ENCODE measurements at regions of chr7 and their contacts with region 1.

Region 1: DNA sequence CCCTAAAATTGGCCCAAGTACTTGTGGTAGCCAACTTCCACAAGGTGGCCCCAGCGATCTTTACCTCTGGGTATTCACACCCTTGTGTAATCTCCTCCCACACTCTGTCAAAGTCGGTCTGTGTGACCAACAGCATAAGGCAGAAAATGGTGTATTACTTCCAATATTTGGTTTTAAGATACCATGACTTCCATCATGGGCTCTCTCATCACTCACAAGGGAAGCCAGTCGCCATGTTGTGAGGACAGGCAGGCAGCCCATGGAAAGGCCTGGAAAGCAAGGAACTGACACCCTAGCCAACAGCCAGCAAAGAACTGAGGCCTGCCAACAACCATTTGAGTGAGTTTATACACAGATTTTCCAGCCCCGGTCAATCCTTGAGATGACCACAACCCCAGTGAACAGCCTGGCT is 91.0 kb upstream of the KMT2E start:
- DNase-seq: peak; percentile 54 to 88 (median 72)
- ATAC-seq: peak; percentile 96
- H3K4me3 ChIP-seq: no peak overlapping the region
- H3K4me3 Mint-ChIP-seq: no peak overlapping the region
- H3K27ac ChIP-seq: no peak overlapping the region
- H3K27ac Mint-ChIP-seq: peak overlapping the region; percentile 55
- H3K4me1 ChIP-seq: no peaks in the 10 kb centered on the region
- H3K4me1 Mint-ChIP-seq: peaks cover 5% of the 10 kb centered on the region
- H3K27me3 ChIP-seq: no peaks in the 10 kb centered on the region
- H3K27me3 Mint-ChIP-seq: no peaks in the 10 kb centered on the region
- CTCF ChIP-seq: peak; percentile 66

Region 2: GRCh38 chr7:103447073-103447951 is 1475.7 kb before region 1 on chr7:
- CTCF ChIA-PET with region 1: no interaction called
- POLR2A ChIA-PET with region 1: no interaction called
- intact Hi-C with region 1: loop called in 1 of 2 experiments (anchors 5 kb)
- DNase-seq: peak in 3 of 9 experiments; percentile 21 to 45 (median 40)
- ATAC-seq: peak; percentile 23
- H3K4me3 ChIP-seq: no peak overlapping the region
- H3K4me3 Mint-ChIP-seq: no peak overlapping the region
- H3K27ac ChIP-seq: no peak overlapping the region
- H3K27ac Mint-ChIP-seq: no peak overlapping the region
- H3K4me1 ChIP-seq: peaks cover 17% of the 10 kb centered on the region
- H3K4me1 Mint-ChIP-seq: peaks cover 19% of the 10 kb centered on the region
- H3K27me3 ChIP-seq: peaks cover 7 to 14% of the 10 kb centered on the region in 2 experiments
- H3K27me3 Mint-ChIP-seq: peaks cover 59% of the 10 kb centered on the region
- CTCF ChIP-seq: peak; percentile 32

Region 3: DNA sequence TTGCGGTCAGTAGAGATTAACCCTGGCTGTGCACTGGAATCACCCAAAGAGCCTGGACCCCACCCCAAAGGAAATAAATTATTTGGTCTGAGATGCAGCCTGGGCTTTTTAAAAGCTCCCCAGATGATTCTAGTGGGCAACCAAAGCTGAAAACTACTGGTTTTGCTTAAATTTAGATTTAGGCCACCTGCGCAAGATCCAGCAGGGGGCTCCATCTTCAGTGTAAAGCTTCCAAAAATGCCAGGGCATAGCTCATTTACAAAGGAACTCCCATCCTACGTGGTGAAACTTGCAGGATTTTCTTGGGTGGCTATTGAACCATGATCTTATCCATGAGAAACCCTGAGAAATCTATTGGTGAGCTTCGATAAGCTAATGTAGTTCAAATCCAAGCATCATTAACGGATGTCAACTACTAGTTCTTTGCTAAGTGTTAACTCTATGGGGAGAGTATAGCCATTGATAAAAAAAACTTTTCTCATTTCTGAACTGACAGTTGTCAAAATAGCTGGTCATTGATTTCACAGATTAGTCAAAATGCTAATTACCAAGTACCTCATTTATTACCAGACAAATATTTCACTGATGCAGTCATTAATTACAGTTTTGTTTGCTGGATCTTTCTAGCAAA is 279.3 kb before region 1 on chr7:
- CTCF ChIA-PET with region 1: no interaction called
- POLR2A ChIA-PET with region 1: no interaction called
- intact Hi-C with region 1: loop called (anchors 2 to 5 kb)
- DNase-seq: no peak
- ATAC-seq: no peak
- H3K4me3 ChIP-seq: no peak overlapping the region
- H3K4me3 Mint-ChIP-seq: no peak overlapping the region
- H3K27ac ChIP-seq: no peak overlapping the region
- H3K27ac Mint-ChIP-seq: no peak overlapping the region
- H3K4me1 ChIP-seq: no peaks in the 10 kb centered on the region
- H3K4me1 Mint-ChIP-seq: no peaks in the 10 kb centered on the region
- H3K27me3 ChIP-seq: no peaks in the 10 kb centered on the region
- H3K27me3 Mint-ChIP-seq: peaks cover 20% of the 10 kb centered on the region
- CTCF ChIP-seq: no peak

Region 4: GRCh38 chr7:104908636-104909035 is 14.4 kb before region 1 on chr7:
- CTCF ChIA-PET with region 1: interaction called, 18 read pairs
- POLR2A ChIA-PET with region 1: no interaction called
- intact Hi-C with region 1: no loop called
- DNase-seq: no peak
- ATAC-seq: no peak
- H3K4me3 ChIP-seq: no peak overlapping the region
- H3K4me3 Mint-ChIP-seq: no peak overlapping the region
- H3K27ac ChIP-seq: no peak overlapping the region
- H3K27ac Mint-ChIP-seq: no peak overlapping the region
- H3K4me1 ChIP-seq: no peaks in the 10 kb centered on the region
- H3K4me1 Mint-ChIP-seq: no peaks in the 10 kb centered on the region
- H3K27me3 ChIP-seq: no peaks in the 10 kb centered on the region
- H3K27me3 Mint-ChIP-seq: peaks cover 10% of the 10 kb centered on the region
- CTCF ChIP-seq: no peak

Region 5: GRCh38 chr7:105003275-105003674 is 80.3 kb after region 1 on chr7:
- CTCF ChIA-PET with region 1: no interaction called
- POLR2A ChIA-PET with region 1: no interaction called
- intact Hi-C with region 1: no loop called
- DNase-seq: peak in 4 of 9 experiments; percentile 49 to 63 (median 54)
- ATAC-seq: peak; percentile 84
- H3K4me3 ChIP-seq: no peak overlapping the region
- H3K4me3 Mint-ChIP-seq: peak overlapping the region; percentile 71
- H3K27ac ChIP-seq: peak overlapping the region in 1 of 2 experiments; percentile 65
- H3K27ac Mint-ChIP-seq: peak overlapping the region; percentile 91
- H3K4me1 ChIP-seq: peaks cover 79% of the 10 kb centered on the region
- H3K4me1 Mint-ChIP-seq: peaks cover 85% of the 10 kb centered on the region
- H3K27me3 ChIP-seq: no peaks in the 10 kb centered on the region
- H3K27me3 Mint-ChIP-seq: no peaks in the 10 kb centered on the region
- CTCF ChIP-seq: no peak

Region 6: DNA sequence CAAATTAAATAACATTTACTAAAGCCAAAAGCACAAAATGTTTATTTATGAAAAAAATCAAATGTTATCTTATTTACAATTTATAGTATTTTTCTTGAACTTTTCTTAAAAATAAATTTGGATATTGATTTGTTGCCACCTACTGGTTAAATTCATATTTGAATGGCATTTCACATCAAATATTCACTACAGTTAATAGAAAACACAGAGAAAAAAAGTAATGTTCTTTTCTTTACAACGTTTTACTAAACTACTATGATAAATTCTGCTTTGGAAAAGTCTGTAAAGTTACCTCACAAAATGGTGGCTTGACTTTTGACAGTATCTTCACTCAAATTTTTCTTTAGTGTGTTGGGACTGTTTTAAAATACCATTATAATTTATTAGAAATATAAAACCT is 413.0 kb after region 1 on chr7:
- CTCF ChIA-PET with region 1: no interaction called
- POLR2A ChIA-PET with region 1: no interaction called
- intact Hi-C with region 1: loop called in 1 of 2 experiments (anchors 5 kb)
- DNase-seq: peak in 1 of 9 experiments; percentile 34
- ATAC-seq: no peak
- H3K4me3 ChIP-seq: no peak overlapping the region
- H3K4me3 Mint-ChIP-seq: no peak overlapping the region
- H3K27ac ChIP-seq: no peak overlapping the region
- H3K27ac Mint-ChIP-seq: no peak overlapping the region
- H3K4me1 ChIP-seq: no peaks in the 10 kb centered on the region
- H3K4me1 Mint-ChIP-seq: peaks cover 26% of the 10 kb centered on the region
- H3K27me3 ChIP-seq: no peaks in the 10 kb centered on the region
- H3K27me3 Mint-ChIP-seq: no peaks in the 10 kb centered on the region
- CTCF ChIP-seq: peak; percentile 84

Region 7: DNA sequence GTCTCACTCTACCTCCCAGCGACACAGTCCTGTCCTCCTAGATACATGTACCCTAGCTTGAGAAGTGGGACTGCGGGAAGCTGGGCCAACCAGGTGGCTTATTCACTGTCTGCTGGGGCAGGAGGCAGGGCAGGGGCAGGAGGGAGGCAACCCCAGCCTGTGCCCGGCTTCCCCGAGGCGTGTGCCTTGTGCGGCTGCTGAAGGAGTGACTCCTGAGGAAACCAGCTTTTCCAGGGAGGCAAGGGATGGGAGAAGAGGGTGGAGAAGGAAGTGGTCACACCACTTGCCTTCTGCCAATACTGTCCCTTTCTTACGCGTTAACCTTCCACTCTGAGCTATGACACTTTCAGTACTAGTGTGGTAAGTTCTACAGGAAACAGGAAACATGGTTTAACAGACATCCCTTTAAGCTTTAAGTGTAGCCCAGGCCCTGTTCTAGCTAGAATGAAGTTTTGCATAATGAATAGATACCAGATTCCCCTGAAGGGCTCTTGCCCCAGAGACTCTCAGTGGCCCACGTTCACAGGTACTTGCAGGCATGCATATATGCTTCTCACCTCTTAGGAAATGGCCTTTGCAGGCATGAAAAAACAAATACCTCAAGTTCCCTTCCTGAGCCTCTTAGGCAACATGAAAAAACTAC is 1148.5 kb after region 1 on chr7:
- CTCF ChIA-PET with region 1: no interaction called
- POLR2A ChIA-PET with region 1: no interaction called
- intact Hi-C with region 1: no loop called
- DNase-seq: peak in 8 of 9 experiments; percentile 22 to 81 (median 50)
- ATAC-seq: peak; percentile 92
- H3K4me3 ChIP-seq: peak overlapping the region; percentile 28 to 31
- H3K4me3 Mint-ChIP-seq: peak overlapping the region; percentile 78
- H3K27ac ChIP-seq: peak overlapping the region; percentile 64 to 83
- H3K27ac Mint-ChIP-seq: peak overlapping the region; percentile 97
- H3K4me1 ChIP-seq: peaks cover 37% of the 10 kb centered on the region
- H3K4me1 Mint-ChIP-seq: peaks cover 67% of the 10 kb centered on the region
- H3K27me3 ChIP-seq: no peaks in the 10 kb centered on the region
- H3K27me3 Mint-ChIP-seq: no peaks in the 10 kb centered on the region
- CTCF ChIP-seq: no peak

Measured in CD8-positive, alpha-beta T cell (primary cell).